CD4-positive, alpha-beta T cell (primary cell): ENCODE measurements at regions of chr12 and their contacts with region 1.

Region 1: DNA sequence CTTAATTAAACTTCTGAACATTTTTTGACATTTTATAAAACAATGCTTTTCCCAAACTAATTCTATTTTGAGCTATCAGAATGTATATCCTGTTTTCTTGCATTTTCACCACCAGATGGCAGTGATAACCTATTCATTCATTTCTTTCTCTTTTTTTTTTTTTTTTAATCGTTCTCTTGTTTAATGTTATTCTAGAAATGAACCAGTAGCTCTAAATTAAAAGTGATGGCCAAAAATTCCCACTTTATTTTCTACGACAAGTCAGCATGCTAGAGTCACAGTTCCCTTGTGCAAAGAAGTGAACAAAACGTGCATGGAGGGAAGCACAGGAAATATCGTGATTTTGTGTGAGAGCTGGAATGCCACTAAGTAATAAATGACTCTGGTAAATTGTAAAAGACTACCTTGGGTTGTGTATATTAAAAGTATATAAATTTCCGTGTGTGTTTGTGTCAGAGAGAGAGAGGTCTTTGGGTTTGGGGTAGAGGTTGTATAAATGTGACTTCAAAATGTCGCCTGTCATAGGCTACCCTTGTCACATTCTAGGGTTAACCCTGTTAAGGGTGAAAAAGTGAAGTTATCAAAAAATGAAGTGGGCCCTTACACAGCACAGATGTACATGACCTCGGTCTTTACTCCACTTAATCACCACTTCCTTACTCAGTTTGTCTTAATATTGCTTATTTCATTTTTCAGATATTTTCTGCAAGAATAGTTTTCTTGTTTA is 40.4 kb upstream of the LDHB start:
- DNase-seq: peak in 3 of 14 experiments; percentile 50 to 69 (median 69)
- ATAC-seq: no peak
- H3K4me3 ChIP-seq: no peak overlapping the region
- H3K4me3 Mint-ChIP-seq: peak overlapping the region; percentile 27
- H3K27ac ChIP-seq: no peak overlapping the region
- H3K27ac Mint-ChIP-seq: no peak overlapping the region
- H3K4me1 ChIP-seq: peaks cover 2% of the 10 kb centered on the region
- H3K4me1 Mint-ChIP-seq: peaks cover 27% of the 10 kb centered on the region
- H3K27me3 ChIP-seq: no peaks in the 10 kb centered on the region
- H3K27me3 Mint-ChIP-seq: peaks cover 5% of the 10 kb centered on the region
- CTCF ChIP-seq: peak; percentile 80

Region 2: GRCh38 chr12:22164139-22164538 is 466.1 kb after region 1 on chr12:
- CTCF ChIA-PET with region 1: interaction called, 4 read pairs
- POLR2A ChIA-PET with region 1: no interaction called
- intact Hi-C with region 1: loop called in 1 of 2 experiments (anchors 10 kb)
- DNase-seq: peak in 4 of 14 experiments; percentile 30 to 71 (median 46)
- ATAC-seq: peak; percentile 66
- H3K4me3 ChIP-seq: peak overlapping the region; percentile 6
- H3K4me3 Mint-ChIP-seq: peak overlapping the region; percentile 57
- H3K27ac ChIP-seq: peak overlapping the region; percentile 5 to 57
- H3K27ac Mint-ChIP-seq: peak overlapping the region; percentile 78
- H3K4me1 ChIP-seq: peaks cover 23% of the 10 kb centered on the region
- H3K4me1 Mint-ChIP-seq: peaks cover 64% of the 10 kb centered on the region
- H3K27me3 ChIP-seq: no peaks in the 10 kb centered on the region
- H3K27me3 Mint-ChIP-seq: no peaks in the 10 kb centered on the region
- CTCF ChIP-seq: no peak

Region 3: GRCh38 chr12:22459838-22460490 is 761.9 kb after region 1 on chr12:
- CTCF ChIA-PET with region 1: no interaction called
- POLR2A ChIA-PET with region 1: no interaction called
- intact Hi-C with region 1: loop called (anchors 2 to 5 kb)
- DNase-seq: peak in 3 of 14 experiments; percentile 54 to 68 (median 65)
- ATAC-seq: peak; percentile 58
- H3K4me3 ChIP-seq: no peak overlapping the region
- H3K4me3 Mint-ChIP-seq: no peak overlapping the region
- H3K27ac ChIP-seq: no peak overlapping the region
- H3K27ac Mint-ChIP-seq: no peak overlapping the region
- H3K4me1 ChIP-seq: no peaks in the 10 kb centered on the region
- H3K4me1 Mint-ChIP-seq: peaks cover 7% of the 10 kb centered on the region
- H3K27me3 ChIP-seq: no peaks in the 10 kb centered on the region
- H3K27me3 Mint-ChIP-seq: no peaks in the 10 kb centered on the region
- CTCF ChIP-seq: peak; percentile 62

Region 4: DNA sequence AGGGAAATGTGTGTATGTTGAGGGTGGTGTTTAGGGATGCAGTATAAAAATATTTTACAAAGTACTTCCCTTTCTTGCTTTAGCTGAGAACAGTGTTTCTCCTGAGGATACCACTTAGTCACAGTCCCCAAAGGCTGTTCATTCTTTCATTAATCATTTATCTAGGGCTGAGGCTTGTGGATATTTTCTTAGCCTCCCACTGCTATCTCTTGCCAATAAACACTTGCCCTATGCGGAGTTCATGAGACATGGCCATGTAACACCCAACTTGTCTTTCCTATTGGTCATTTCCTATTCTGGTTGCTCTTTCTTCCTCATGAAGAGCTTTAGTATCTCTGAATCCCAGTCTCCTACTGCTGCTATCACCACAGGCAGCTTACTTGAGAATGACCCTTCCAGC is 1002.0 kb after region 1 on chr12:
- CTCF ChIA-PET with region 1: no interaction called
- POLR2A ChIA-PET with region 1: no interaction called
- intact Hi-C with region 1: no loop called
- DNase-seq: no peak
- ATAC-seq: no peak
- H3K4me3 ChIP-seq: no peak overlapping the region
- H3K4me3 Mint-ChIP-seq: no peak overlapping the region
- H3K27ac ChIP-seq: no peak overlapping the region
- H3K27ac Mint-ChIP-seq: no peak overlapping the region
- H3K4me1 ChIP-seq: no peaks in the 10 kb centered on the region
- H3K4me1 Mint-ChIP-seq: no peaks in the 10 kb centered on the region
- H3K27me3 ChIP-seq: no peaks in the 10 kb centered on the region
- H3K27me3 Mint-ChIP-seq: no peaks in the 10 kb centered on the region
- CTCF ChIP-seq: no peak

Region 5: GRCh38 chr12:23115984-23116383 is 1417.9 kb after region 1 on chr12:
- CTCF ChIA-PET with region 1: no interaction called
- POLR2A ChIA-PET with region 1: no interaction called
- intact Hi-C with region 1: no loop called
- DNase-seq: no peak
- ATAC-seq: no peak
- H3K4me3 ChIP-seq: no peak overlapping the region
- H3K4me3 Mint-ChIP-seq: no peak overlapping the region
- H3K27ac ChIP-seq: no peak overlapping the region
- H3K27ac Mint-ChIP-seq: no peak overlapping the region
- H3K4me1 ChIP-seq: no peaks in the 10 kb centered on the region
- H3K4me1 Mint-ChIP-seq: no peaks in the 10 kb centered on the region
- H3K27me3 ChIP-seq: no peaks in the 10 kb centered on the region
- H3K27me3 Mint-ChIP-seq: no peaks in the 10 kb centered on the region
- CTCF ChIP-seq: no peak